WTC11 (cell line): ENCODE measurements at regions of chr19 and their contacts with region 1.

Region 1: DNA sequence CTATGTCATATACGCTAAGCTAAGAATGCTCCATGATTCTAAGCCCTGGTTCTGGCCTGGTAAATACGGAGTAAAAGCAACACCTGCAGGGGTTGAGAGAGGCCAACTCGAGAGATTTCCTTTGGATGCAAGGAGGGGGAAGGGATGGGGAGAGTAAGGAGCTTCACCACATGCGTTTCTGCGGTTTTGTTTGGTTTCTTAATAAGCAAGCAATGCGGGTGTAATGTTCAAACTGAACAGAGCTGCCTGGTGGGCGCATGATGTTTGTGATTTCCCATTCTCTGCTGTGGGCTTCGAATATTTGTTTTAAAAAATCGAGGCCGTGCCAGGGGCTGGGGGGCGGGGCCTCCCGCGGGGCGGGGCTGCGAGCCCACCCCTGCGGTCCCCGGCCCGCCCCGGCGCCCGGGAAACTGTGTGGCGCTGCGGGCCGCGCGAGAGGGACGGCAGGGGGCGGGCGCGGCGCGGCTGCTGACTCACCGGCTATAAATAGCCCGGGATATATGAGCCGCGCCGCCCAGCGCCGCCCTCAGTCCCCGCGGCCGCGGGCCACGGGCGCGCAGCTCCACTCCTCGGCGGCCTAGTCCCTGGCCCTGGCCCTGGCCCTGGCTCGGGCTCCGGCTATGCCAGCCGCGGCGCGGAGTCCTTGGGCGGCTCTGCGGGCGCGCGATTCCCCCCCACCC is 5.1 kb downstream of the BBC3 start:
- DNase-seq: peak; percentile 84
- ATAC-seq: peak; percentile 18
- H3K4me3 Mint-ChIP-seq: peak overlapping the region; percentile 43
- H3K27ac Mint-ChIP-seq: peak overlapping the region; percentile 95
- H3K4me1 Mint-ChIP-seq: peaks cover 16% of the 10 kb centered on the region
- H3K27me3 Mint-ChIP-seq: no peaks in the 10 kb centered on the region; the same call in 1 of the 2 replicates
- CTCF ChIP-seq: no peak

Region 2: DNA sequence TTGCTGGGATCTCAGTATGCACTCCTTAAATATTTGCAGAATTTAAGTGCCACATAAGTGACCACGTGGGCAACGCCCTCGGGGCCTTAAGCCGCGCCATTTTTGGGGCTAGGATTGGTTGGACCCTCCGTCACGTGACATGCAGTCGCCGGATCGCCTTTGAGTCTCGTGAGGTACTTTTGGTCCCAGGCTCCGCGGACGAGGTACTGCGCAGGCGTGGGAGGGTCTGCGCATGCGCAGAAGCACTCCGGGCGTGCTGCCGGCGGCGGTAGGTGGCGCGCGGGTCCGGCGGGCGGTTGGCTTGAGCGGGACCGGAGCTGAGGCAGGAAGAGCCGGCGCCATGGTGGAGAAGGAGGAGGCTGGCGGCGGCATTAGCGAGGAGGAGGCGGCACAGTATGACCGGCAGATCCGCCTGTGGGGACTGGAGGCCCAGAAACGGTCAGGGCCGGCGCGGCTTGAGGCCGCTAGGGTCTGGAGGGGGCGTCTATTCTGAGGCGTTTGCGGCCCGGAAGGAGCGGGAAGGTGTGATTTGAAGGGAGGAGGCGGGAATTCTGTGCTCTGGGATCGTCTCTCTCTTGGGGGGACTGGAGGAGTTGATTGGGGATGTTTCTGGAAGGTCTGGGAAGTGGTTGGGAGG is 95.2 kb before region 1 on chr19 and contains the start of gene SAE1:
- CTCF ChIA-PET with region 1: interaction called, 7 read pairs
- POLR2A ChIA-PET with region 1: interaction called, 11 read pairs
- DNase-seq: peak; percentile 97
- ATAC-seq: peak; percentile 88
- H3K4me3 Mint-ChIP-seq: peak within 1 kb of the TSS; percentile 96
- H3K27ac Mint-ChIP-seq: peak within 1 kb of the TSS; percentile 95
- H3K4me1 Mint-ChIP-seq: peaks cover 38% of the 10 kb centered on the region
- H3K27me3 Mint-ChIP-seq: peaks cover 11% of the 10 kb centered on the region
- CTCF ChIP-seq: no peak
- total RNA-seq, gene SAE1: 215 to 224 TPM (median 221 TPM) in 3 replicates

Region 3: DNA sequence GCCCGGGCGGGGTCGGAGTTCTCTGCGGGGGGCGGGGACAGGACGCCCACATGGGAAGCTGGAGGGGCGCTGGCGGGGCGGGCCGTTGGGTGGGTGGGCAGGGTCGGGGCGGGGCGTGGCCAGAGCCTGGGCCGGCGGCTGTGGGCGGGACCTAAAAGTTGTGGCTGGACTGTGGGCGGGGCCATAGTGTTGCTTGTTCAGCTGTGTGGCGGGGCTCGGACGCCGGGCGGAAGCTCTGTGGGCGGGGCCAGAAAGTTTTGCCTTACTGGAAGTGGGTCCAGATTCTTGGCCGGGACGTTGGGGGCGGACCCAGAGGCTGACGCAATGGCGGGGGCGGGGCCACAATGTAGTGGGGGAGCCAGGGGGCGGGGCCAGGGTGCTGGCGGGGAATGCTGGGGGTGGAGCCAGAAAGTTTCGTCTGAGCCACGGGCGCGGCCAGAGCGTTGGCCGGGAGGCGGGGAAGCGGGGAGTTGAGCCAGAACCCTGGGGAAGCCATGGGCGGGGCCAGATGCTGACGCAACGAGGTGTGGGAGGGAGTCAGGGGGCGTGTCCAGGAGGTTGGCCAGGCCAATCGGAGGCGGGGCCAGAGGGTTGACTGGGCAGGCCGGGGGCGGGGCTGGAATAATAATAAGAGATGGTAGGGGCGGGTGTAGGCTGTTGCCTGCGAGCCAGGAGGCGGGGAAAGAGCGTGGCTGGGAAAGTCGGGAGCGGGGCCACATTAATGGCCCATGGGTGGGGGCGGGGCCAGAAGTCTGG is 31.0 kb after region 1 on chr19:
- CTCF ChIA-PET with region 1: interaction called, 6 read pairs
- POLR2A ChIA-PET with region 1: interaction called, 22 read pairs
- DNase-seq: peak; percentile 100
- ATAC-seq: peak; percentile 86
- H3K4me3 Mint-ChIP-seq: peak overlapping the region; percentile 87
- H3K27ac Mint-ChIP-seq: peak overlapping the region; percentile 97
- H3K4me1 Mint-ChIP-seq: peaks cover 12% of the 10 kb centered on the region
- H3K27me3 Mint-ChIP-seq: peaks cover 19% of the 10 kb centered on the region
- CTCF ChIP-seq: no peak

Region 4: DNA sequence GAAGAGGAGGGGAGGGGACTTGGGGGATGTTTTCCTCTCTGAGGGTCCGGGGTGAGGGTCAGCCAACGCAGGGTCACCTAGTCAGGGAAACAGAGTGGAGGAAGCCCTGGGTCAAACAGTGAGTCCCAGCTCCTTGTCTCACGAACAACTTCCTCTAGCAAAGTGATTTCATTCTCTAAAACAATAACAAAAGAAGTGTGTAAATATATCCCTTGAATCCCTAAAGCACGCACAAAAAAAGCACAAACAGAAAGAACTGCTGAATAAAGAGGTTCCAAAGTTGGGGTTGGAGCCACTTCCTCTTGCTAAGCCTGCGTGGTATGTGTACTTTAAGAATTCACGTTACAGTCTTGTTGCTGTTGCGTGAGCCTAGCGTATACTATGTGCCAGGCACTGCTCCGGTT is 104.6 kb after region 1 on chr19:
- CTCF ChIA-PET with region 1: no interaction called
- POLR2A ChIA-PET with region 1: no interaction called
- DNase-seq: no peak
- ATAC-seq: no peak
- H3K4me3 Mint-ChIP-seq: no peak overlapping the region
- H3K27ac Mint-ChIP-seq: no peak overlapping the region
- H3K4me1 Mint-ChIP-seq: 0 out of 2 replicates have a peak, but pooled peaks cover 4% of the 10 kb centered on the region
- H3K27me3 Mint-ChIP-seq: peaks cover 4% of the 10 kb centered on the region; the same call in 1 of the 2 replicates
- CTCF ChIP-seq: no peak